Vagina (tissue), 2 donors: ENCODE measurements at regions of chr9 and their contacts with region 1.

Region 1: GRCh38 chr9:37197158-37198038 is 77.0 kb downstream of the ZCCHC7 start:
- DNase-seq: no peak
- H3K4me3 ChIP-seq: no peak overlapping the region
- H3K27ac ChIP-seq: no peak overlapping the region
- H3K4me1 ChIP-seq: peaks cover 9% of the 10 kb centered on the region
- H3K27me3 ChIP-seq: no peaks in the 10 kb centered on the region
- CTCF ChIP-seq: no peak
- POLR2A ChIP-seq: no peak

Region 2: DNA sequence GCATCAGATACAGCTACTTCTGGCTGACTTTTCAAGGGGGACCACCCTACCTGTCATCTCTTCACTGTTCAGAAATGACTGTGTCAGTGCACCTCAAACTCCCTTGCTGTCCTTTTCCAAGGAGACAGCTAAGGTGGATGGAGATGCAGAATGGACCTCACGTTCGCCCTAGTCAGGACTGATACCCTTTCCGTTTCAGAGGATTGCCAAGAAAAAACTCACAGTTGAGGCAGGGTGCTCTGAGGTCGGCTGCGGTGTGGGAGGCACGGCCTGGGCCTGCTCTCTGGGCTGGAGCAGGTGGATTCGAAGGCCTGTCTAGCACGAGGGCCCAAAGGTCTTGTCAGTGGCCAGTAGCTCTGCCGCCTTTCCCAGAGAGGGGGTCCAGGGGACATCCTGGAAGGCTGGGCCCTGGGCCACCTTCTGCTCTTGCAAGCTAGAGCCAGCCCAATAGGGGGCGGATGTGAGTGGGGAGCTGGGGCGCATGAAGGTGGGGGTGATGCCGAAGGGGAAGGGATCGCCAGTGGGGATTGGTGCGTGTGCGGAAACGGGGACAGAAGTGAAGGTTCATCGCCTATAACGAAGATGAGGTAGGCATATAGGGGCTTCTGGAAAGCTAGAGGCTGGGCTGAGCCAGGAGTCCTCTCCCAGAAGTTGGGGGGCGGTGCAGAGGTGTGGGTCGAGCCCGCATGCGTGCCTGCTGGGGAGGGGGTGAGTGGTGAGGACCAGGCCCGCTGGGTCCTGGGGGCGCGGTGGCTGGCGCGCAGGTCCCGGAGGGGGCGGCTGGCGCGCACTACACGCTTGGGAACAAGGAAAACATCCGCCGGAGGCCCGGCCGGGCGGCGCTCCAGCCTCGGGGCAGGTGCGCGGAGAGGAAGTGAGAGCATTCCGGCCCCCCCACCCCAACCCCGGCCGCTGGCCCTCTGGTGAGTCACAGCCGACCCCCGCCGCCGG is 1440.8 kb before region 1 on chr9:
- intact Hi-C with region 1: loop called (anchors 10 kb)
- DNase-seq: no peak
- H3K4me3 ChIP-seq: peak overlapping the region; percentile 47 to 53
- H3K27ac ChIP-seq: peak overlapping the region; percentile 70
- H3K4me1 ChIP-seq: peaks cover 23% of the 10 kb centered on the region
- H3K27me3 ChIP-seq: no peaks in the 10 kb centered on the region
- CTCF ChIP-seq: peak in 1 of 3 experiments; percentile 32
- POLR2A ChIP-seq: no peak

Region 3: DNA sequence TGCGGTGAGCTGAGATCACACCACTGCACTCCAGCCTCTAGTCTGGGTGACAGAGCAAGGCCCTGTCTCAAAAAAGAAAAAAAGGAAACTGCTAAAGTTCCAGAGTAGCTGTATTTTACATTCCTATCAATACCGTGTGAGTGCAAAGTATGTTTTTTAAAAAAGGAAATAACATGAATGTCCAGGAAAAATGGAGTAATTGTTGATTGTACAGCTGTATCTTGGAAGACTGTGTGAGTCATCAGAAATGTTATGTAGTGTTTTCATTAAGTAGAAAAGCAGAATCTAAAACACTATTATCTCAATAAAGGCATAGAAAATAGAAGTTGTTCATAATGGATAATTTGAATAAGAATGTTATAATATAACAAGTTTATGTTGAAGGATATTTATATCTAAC is 23.2 kb before region 1 on chr9:
- intact Hi-C with region 1: no loop called
- DNase-seq: no peak
- H3K4me3 ChIP-seq: no peak overlapping the region
- H3K27ac ChIP-seq: no peak overlapping the region
- H3K4me1 ChIP-seq: no peaks in the 10 kb centered on the region
- H3K27me3 ChIP-seq: no peaks in the 10 kb centered on the region
- CTCF ChIP-seq: no peak
- POLR2A ChIP-seq: no peak

Region 4: DNA sequence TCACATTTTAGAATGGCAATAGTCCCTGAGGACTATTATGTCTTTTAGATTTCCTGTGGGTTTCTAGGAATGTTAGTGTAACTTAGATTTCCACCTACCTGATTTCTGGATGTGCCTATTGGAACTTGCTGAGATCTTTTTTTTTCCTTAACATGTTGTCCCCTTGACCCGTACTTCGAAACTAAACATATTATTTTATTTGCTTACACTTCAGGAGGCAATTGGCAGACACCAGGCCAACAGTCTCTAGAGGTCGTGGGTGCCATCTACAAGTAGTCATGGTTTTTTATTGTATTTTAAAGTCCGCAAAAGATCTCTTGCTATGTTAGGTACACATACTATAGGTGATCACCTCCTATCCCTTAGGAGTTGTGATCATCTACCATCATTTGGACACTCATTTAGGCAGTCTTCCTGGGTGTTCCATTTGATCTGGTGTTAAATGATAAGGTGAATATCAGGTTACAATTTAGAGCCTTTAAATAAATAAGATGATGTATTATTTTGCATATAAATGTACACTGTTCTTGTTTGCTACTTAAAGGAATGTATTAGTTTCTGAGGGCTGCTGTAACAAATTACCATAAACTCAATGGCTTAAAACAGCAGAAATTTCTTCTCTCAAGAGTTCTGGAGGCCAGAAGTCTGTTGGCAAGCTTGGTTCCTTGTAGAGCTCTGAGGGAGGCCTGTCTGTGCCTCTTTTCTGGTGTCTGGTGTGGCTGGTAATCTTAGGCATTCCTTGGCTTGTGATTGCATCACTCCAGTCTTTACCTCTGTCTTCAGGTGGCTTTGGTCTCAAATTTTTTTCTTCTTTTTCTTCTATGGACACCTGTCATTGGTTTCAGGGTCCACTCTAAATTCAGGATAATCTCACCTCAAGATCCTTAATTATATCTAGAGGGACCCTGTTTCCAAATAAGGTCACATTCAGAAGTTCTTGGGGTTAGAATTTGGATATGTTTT is 12.2 kb before region 1 on chr9:
- intact Hi-C with region 1: no loop called
- DNase-seq: no peak
- H3K4me3 ChIP-seq: no peak overlapping the region
- H3K27ac ChIP-seq: no peak overlapping the region
- H3K4me1 ChIP-seq: no peaks in the 10 kb centered on the region
- H3K27me3 ChIP-seq: no peaks in the 10 kb centered on the region
- CTCF ChIP-seq: no peak
- POLR2A ChIP-seq: no peak